ENCODE measurements at regions of chr11 and their contacts with region 1.

Region 1: DNA sequence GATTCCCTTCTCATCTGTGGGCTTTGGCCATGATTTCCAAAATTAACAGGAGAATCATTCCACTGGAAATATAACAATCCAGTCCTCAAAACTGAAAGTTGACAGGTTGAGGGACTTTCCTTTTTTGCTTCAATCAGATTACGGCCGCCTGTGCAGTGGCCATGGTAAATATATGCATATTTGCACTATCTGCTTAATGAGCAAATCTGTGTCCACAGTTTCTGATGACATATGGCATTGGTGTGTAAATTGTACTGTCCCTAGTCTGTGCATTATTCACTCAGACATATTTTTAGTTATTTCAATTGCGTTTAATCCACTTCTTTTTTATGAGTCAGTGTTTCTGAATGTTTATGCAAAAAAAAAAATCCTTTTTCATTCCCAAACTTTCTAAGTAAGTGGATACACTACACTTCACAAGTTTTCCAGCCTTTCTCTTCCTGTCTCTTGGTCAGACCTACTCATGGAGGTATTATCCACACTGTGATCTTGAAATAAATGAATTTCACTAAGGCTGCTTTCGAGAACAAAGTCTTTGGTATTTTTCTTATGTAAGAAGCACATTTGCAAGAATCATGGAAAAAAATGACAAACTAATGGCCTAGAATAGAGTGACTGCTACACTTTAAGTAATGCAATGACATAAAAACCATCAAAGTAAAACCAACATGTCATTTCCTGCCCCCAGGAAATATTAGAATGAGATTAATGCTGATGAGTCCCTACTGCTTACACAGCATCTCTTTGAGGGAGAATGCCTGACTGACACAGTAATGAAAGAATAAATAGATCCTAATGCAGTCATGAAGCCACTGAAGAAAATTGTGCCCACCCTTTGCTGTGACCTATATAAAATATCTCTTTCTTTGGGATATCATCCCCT is 76.4 kb upstream of the MTNR1B start:
- DNase-seq: no peak
- ATAC-seq: no peak
- H3K4me3 ChIP-seq: no peak overlapping the region
- H3K27ac ChIP-seq: no peak overlapping the region
- H3K4me1 ChIP-seq: no peaks in the 10 kb centered on the region
- H3K27me3 ChIP-seq: no peaks in the 10 kb centered on the region
- CTCF ChIP-seq: no peak

Region 2: DNA sequence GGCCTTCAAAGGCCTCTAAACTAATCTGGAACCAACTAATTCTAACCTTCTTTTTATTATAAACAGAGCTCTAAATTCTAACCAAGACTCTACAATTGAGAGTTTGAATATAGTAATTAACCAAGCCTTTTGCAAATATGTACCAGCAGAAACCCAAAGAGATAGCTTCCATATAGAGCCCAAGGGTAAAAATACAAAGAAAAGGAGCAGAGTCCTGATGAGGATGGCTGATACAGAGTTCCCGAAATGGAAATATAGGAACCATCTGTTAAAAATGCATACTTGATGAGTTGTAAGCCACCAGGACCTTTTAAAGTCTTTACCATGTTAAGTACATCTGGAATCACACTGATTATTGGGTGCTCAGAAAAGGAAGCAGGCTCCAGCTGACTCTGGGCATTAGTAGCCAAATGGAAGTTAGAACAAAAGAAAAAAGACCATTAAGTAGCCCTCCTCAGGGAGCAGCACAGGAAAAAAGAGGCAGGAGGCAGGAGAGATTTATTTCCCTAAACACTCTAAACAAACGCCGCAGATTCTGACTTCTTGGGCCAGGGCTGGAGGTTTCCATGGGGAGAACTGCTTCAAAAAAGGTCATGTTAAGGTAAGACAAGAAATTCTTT is 1131.5 kb before region 1 on chr11:
- intact Hi-C with region 1: loop called in 1 of 2 experiments (anchors 10 kb)
- DNase-seq: no peak
- ATAC-seq: no peak
- H3K4me3 ChIP-seq: no peak overlapping the region
- H3K27ac ChIP-seq: no peak overlapping the region
- H3K4me1 ChIP-seq: no peaks in the 10 kb centered on the region
- H3K27me3 ChIP-seq: no peaks in the 10 kb centered on the region
- CTCF ChIP-seq: no peak

Region 3: GRCh38 chr11:93073026-93073425 is 180.0 kb after region 1 on chr11:
- intact Hi-C with region 1: no loop called
- DNase-seq: no peak
- ATAC-seq: no peak
- H3K4me3 ChIP-seq: no peak overlapping the region
- H3K27ac ChIP-seq: no peak overlapping the region
- H3K4me1 ChIP-seq: no peaks in the 10 kb centered on the region
- H3K27me3 ChIP-seq: no peaks in the 10 kb centered on the region
- CTCF ChIP-seq: no peak